ENCODE measurements at regions of chr7 and their contacts with region 1.

Region 1: GRCh38 chr7:3897438-3898385 is 596.7 kb downstream of the SDK1 start:
- DNase-seq: no peak
- ATAC-seq: no peak
- H3K4me3 ChIP-seq: no peak overlapping the region
- H3K27ac ChIP-seq: no peak overlapping the region
- H3K4me1 ChIP-seq: peaks cover 0 to 3% of the 10 kb centered on the region in 2 donors
- H3K27me3 ChIP-seq: no peaks in the 10 kb centered on the region

Region 2: DNA sequence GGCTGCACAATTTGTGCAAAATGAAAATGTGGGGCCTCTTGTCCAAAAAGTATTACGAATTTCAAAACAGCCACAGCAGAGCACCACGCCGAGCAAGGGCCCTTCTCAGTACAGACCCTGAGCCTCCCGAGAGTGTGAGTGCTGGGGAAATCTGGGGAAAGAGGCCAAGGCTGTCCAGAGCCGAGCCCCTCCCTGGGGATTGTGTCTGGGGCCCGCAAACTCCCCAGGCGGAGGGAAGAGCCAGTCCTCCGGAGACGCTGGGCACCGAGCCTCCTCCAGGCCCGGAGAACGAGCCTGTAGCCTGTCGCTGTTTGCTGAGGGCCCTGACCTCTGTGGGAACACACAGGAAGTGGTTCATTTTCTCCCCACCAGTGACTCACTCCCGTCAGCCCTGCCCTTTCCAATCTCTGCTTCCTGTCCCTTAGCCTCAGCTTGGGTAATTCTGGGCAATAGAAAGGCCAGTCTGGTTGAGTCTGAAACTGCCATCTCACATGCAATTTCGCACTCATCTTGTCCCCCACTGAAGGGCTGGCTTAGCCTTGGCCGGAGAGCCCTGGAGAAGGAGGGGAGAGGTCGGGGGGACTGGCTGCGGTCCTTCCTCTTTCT is 1034.1 kb before region 1 on chr7:
- intact Hi-C with region 1: loop called in 1 of 2 experiments (anchors 10 kb)
- DNase-seq: peak; percentile 93 to 94
- ATAC-seq: peak; percentile 95
- H3K4me3 ChIP-seq: no peak overlapping the region
- H3K27ac ChIP-seq: peak overlapping the region; percentile 83 to 96
- H3K4me1 ChIP-seq: no peaks in the 10 kb centered on the region
- H3K27me3 ChIP-seq: no peaks in the 10 kb centered on the region

Region 3: DNA sequence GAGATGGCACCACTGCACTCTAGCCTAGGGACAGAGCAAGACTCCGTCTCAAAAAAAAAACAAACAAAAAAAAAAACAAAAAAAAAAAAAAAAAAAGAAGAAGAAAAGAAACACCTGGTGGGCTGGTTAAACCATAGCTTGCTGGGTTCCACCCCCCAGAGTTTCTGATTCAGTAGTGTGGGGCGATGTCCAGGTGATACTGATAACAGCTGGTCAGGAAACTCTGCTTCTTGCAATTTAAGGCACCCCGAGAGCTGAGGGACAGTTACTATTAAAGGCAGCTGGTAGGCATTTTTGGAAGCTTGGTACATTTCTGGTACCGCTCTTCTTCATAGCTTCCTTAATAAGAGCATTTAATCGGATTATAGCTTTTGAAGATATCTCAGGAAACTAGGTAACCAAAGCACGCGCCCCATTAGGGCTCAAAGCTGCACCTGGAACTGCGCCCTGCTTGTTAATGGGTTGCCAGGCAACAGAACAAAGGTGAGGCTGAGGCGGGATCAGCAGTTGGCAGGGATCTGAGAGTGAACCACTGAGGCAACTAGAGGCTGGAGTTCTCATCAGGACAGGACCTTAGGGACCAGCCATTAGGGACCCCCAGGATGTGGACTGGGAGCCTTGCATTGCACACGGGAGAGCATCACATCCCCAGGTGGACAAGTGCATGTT is 603.1 kb before region 1 on chr7:
- intact Hi-C with region 1: loop called in 1 of 2 experiments (anchors 10 kb)
- DNase-seq: peak in 1 of 2 donors; percentile 59
- ATAC-seq: no peak
- H3K4me3 ChIP-seq: no peak overlapping the region
- H3K27ac ChIP-seq: no peak overlapping the region
- H3K4me1 ChIP-seq: no peaks in the 10 kb centered on the region
- H3K27me3 ChIP-seq: no peaks in the 10 kb centered on the region

Region 4: GRCh38 chr7:3300651-3301378 is 596.9 kb before region 1 on chr7 and contains the start of gene SDK1:
- intact Hi-C with region 1: loop called (anchors 5 to 10 kb)
- DNase-seq: peak; percentile 95 to 98
- ATAC-seq: peak; percentile 95
- H3K4me3 ChIP-seq: peak within 1 kb of the TSS; percentile 97 to 99
- H3K27ac ChIP-seq: peak within 1 kb of the TSS; percentile 45 to 92
- H3K4me1 ChIP-seq: peaks cover 4 to 5% of the 10 kb centered on the region in 2 donors
- H3K27me3 ChIP-seq: no peaks in the 10 kb centered on the region
- total RNA-seq, gene SDK1: 20.0 to 46.3 TPM

Region 5: GRCh38 chr7:4123823-4124222 is 226.1 kb after region 1 on chr7:
- intact Hi-C with region 1: no loop called
- DNase-seq: peak; percentile 6 to 34
- ATAC-seq: no peak
- H3K4me3 ChIP-seq: no peak overlapping the region
- H3K27ac ChIP-seq: no peak overlapping the region
- H3K4me1 ChIP-seq: no peaks in the 10 kb centered on the region
- H3K27me3 ChIP-seq: no peaks in the 10 kb centered on the region

Region 6: GRCh38 chr7:4282434-4283223 is 384.9 kb after region 1 on chr7:
- intact Hi-C with region 1: no loop called
- DNase-seq: no peak
- ATAC-seq: no peak
- H3K4me3 ChIP-seq: no peak overlapping the region
- H3K27ac ChIP-seq: no peak overlapping the region
- H3K4me1 ChIP-seq: no peaks in the 10 kb centered on the region
- H3K27me3 ChIP-seq: no peaks in the 10 kb centered on the region